GM18951 (cell line): ENCODE measurements at regions of chr14 and their contacts with region 1.

Region 1: DNA sequence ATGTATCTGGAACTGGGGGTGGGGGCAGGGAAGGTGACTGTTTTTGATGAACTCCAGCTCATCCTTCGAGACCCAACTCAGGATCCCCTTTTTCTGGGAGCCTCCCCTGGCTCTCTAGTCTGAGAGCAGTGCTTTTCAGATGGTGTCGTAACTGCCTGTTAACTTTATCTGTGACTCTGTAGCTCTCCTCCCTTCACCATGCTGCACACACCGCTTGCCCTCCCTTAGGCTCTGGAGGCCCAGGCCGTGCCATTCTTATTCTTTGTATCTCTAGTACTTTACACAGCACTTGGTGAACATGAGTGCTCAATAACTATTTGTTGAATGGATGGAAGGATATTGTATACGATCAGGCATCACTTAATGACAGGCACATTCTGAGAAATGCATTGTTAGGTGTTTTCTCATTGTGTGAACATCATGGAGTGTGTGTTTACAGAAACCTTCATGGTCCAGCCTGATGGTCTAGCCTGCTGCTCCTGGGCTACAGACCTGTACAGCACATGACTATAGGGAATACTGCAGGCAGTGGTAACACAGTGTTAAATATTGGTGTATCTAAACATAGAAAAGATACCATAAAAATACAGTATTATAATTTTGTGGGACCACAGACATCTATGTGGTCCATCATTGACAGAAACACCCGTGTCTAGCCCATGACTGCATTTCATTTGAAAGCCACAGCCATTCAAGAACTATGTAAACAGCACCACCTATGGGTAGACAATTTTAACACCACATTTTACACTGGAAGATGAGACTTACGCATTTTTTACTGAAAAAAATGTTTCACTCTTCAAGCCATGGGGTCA is 91.8 kb downstream of the EML1 start:
- POLR2A ChIP-seq: no peak

Region 2: GRCh38 chr14:99518441-99519346 is 366.3 kb before region 1 on chr14:
- in situ Hi-C with region 1: loop called (anchors 25 kb)
- POLR2A ChIP-seq: no peak

Region 3: DNA sequence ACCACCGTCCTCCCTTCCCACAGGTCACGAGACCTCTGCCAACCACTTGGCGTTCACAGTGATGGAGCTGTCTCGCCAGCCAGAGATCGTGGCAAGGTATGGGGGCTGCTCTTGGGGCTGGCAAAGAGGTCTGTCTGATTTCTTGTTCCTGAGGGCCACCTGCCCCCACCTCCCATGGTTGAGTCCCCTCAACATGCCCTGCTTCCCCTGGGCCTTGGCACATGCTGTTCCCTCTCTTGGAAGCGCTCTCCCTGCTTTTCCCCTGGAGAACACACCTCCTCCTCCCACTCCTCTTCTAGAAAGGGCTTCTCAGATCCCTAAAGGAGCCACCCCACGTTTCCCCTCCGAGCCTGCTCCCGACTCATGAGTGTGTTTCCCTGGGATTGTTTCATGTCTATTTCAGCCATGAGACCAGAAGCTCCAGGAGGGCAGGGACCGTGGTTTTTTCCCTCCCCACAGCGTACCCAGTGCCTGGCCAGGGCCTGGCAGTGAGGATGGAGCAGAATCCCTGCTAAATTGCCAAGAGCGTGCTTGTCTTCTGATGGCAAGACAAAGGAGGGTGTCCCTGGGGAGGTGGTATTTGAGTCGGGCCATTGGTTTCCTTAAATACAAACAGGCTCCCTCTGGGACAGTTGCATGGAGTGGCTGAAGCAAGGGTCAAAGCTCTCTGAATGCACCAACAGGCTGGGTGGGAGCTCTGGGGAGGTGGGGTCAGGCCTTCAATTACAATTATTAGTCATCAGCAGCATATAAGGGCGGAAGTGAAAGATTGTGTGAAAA is 166.8 kb before region 1 on chr14:
- in situ Hi-C with region 1: loop called (anchors 25 kb)
- POLR2A ChIP-seq: no peak

Region 4: GRCh38 chr14:99821519-99822508 is 63.2 kb before region 1 on chr14:
- in situ Hi-C with region 1: no loop called
- POLR2A ChIP-seq: no peak